ENCODE measurements at regions of chr1 and their contacts with region 1.

Region 1: DNA sequence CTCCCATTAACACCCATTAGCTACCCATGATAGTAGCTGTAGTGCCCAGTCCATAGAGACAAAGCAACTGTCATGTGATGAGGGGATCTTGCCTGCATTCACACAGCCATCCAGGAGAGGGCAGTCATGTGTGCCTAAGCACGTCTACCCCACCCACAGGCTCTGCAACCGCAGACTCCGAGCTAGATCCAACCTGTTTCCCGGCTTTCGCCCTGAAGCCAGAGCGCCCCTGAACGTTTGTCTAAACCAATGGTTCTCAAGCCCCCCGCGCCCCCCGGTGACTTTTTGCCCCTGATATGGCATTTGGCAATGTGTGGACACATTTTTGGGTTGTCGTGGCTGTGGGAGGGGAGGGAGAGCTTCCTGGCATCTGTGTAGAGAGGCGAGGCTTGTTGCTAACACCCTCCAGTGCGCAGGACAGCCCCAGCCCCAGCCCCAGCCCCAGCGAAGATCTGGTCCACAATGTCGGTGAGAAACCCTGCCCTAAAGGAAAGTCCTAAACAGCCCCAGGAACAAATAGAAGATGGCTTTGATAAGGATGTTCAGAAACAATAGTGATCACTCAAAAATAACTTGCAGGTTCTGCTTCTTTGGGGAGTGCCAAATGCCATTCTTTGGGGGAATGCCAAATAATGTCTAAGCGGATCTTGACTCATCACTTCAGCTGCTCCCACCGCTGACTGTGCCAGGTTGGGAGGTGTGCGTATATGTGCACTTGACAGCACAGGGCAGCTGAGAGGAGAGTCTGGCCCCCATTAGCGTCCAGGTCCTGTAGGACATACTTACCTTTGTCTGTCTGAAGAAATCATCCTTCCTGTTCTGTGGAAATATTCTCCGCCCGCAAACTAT is 34.5 kb downstream of the SLC44A3 start:
- DNase-seq: peak; percentile 87 to 97
- H3K4me3 ChIP-seq: peak overlapping the region; percentile 33 to 49 (median 38)
- H3K27ac ChIP-seq: peak overlapping the region; percentile 28 to 81 (median 77)
- H3K4me1 ChIP-seq: peaks cover 11 to 24% (median 21%) of the 10 kb centered on the region in 4 donors
- H3K27me3 ChIP-seq: no peaks in the 10 kb centered on the region
- CTCF ChIP-seq: peak in 5 of 7 experiments; percentile 83 to 98 (median 87)
- EP300 ChIP-seq: no peak
- POLR2A ChIP-seq: no peak

Region 2: GRCh38 chr1:94873522-94874351 is 19.1 kb after region 1 on chr1:
- intact Hi-C with region 1: no loop called
- DNase-seq: peak in 1 of 2 donors; percentile 67
- H3K4me3 ChIP-seq: no peak overlapping the region
- H3K27ac ChIP-seq: peak overlapping the region in 2 of 5 donors; percentile 27 to 75
- H3K4me1 ChIP-seq: peaks cover 0 to 24% (median 7%) of the 10 kb centered on the region in 4 donors
- H3K27me3 ChIP-seq: no peaks in the 10 kb centered on the region
- CTCF ChIP-seq: no peak
- EP300 ChIP-seq: no peak
- POLR2A ChIP-seq: no peak

Region 3: GRCh38 chr1:95043141-95043980 is 188.7 kb after region 1 on chr1:
- intact Hi-C with region 1: loop called (anchors 5 kb)
- DNase-seq: peak; percentile 89 to 95
- H3K4me3 ChIP-seq: no peak overlapping the region
- H3K27ac ChIP-seq: peak overlapping the region in 4 of 5 donors; percentile 35 to 78 (median 60)
- H3K4me1 ChIP-seq: peaks cover 0 to 27% (median 17%) of the 10 kb centered on the region in 4 donors
- H3K27me3 ChIP-seq: no peaks in the 10 kb centered on the region
- CTCF ChIP-seq: peak in 6 of 7 experiments; percentile 94 to 100 (median 98)
- EP300 ChIP-seq: no peak
- POLR2A ChIP-seq: no peak

Measured in stomach (tissue), 19 donors.